CD4-positive, alpha-beta T cell (primary cell): ENCODE measurements at regions of chr6 and their contacts with region 1.

Region 1: DNA sequence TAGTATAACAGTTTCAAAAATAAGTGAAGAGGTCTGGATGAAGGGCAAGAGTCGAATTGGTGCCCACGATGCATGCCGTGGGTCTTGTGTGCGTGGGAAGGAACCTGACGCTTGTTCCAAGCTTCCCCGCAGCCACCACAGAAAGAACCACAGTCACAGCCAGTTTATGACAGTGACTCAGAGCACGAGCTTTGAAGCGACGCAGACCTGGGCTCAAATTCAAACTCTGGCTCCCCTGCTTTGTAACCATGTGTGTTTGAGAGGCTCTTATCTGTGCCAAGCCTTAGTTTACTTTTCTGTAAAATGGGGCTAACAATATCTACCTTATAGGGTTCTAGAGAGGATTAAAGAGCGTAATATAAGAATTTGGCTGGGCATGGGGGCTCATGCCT is 65.5 kb downstream of the SYNJ2 start:
- DNase-seq: peak in 10 of 14 experiments; percentile 13 to 69 (median 36)
- ATAC-seq: peak; percentile 62
- H3K4me3 ChIP-seq: no peak overlapping the region
- H3K4me3 Mint-ChIP-seq: no peak overlapping the region
- H3K27ac ChIP-seq: no peak overlapping the region
- H3K27ac Mint-ChIP-seq: peak overlapping the region; percentile 60
- H3K4me1 ChIP-seq: peaks cover 15% of the 10 kb centered on the region
- H3K4me1 Mint-ChIP-seq: peaks cover 25% of the 10 kb centered on the region
- H3K27me3 ChIP-seq: no peaks in the 10 kb centered on the region
- H3K27me3 Mint-ChIP-seq: no peaks in the 10 kb centered on the region
- CTCF ChIP-seq: no peak

Region 2: DNA sequence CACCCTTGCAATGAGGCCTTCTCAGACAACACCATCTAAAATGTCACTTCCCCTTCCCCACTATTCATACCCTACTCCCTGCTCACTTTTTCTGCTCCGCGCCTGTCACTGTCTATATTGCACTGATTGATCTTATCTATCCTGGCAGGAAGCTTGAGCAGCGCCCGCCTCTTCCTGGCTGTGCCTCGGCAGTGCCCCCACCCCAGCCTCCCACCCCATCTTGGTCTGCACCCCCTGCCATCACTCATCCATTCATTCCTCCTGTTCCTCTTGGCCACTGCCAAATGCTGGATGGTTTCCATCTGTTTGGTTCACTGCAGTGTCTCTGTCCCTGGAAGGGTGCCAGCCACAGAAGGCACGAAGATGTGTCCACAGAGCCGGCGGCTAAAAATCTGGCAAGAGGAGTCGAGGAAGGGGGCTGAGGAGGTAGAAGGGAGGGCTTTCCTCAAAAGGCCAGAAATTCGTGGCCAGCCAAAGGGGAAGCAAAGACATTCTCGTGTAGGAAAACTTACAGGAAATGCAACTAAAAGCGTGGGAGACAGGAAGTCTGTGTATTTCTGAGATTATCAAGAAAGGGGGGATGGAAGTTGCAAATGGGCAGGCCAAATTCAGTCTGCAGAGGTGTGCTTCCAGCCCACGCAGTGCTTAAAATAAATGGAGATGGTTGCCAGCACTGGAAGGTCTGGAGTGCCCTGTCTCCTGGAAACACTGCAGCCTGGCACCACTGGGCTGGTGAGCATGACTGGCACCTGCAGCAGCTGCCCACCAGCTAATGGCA is 37.8 kb before region 1 on chr6:
- CTCF ChIA-PET with region 1: no interaction called
- POLR2A ChIA-PET with region 1: no interaction called
- intact Hi-C with region 1: no loop called
- DNase-seq: peak in 9 of 14 experiments; percentile 16 to 61 (median 33)
- ATAC-seq: peak; percentile 79
- H3K4me3 ChIP-seq: peak overlapping the region; percentile 47
- H3K4me3 Mint-ChIP-seq: peak overlapping the region; percentile 68
- H3K27ac ChIP-seq: peak overlapping the region; percentile 42 to 63
- H3K27ac Mint-ChIP-seq: peak overlapping the region; percentile 74
- H3K4me1 ChIP-seq: peaks cover 61% of the 10 kb centered on the region
- H3K4me1 Mint-ChIP-seq: peaks cover 87% of the 10 kb centered on the region
- H3K27me3 ChIP-seq: no peaks in the 10 kb centered on the region
- H3K27me3 Mint-ChIP-seq: no peaks in the 10 kb centered on the region
- CTCF ChIP-seq: no peak

Region 3: GRCh38 chr6:158057213-158057987 is 10.3 kb after region 1 on chr6:
- CTCF ChIA-PET with region 1: no interaction called
- POLR2A ChIA-PET with region 1: interaction called, 13 read pairs
- intact Hi-C with region 1: no loop called
- DNase-seq: peak in 3 of 14 experiments; percentile 17 to 73 (median 62)
- ATAC-seq: no peak
- H3K4me3 ChIP-seq: no peak overlapping the region
- H3K4me3 Mint-ChIP-seq: no peak overlapping the region
- H3K27ac ChIP-seq: peak overlapping the region in 1 of 2 donors; percentile 12
- H3K27ac Mint-ChIP-seq: peak overlapping the region; percentile 79
- H3K4me1 ChIP-seq: peaks cover 40% of the 10 kb centered on the region
- H3K4me1 Mint-ChIP-seq: peaks cover 31% of the 10 kb centered on the region
- H3K27me3 ChIP-seq: no peaks in the 10 kb centered on the region
- H3K27me3 Mint-ChIP-seq: no peaks in the 10 kb centered on the region
- CTCF ChIP-seq: no peak